ENCODE measurements at regions of chr21 and their contacts with region 1.

Region 1: GRCh38 chr21:33542640-33543504 is at the start of gene SON:
- DNase-seq: peak; percentile 98 to 100 (median 98)
- ATAC-seq: peak; percentile 93
- H3K4me3 ChIP-seq: peak within 1 kb of the TSS; percentile 71
- H3K27ac ChIP-seq: peak within 1 kb of the TSS; percentile 99
- H3K4me1 ChIP-seq: peaks cover 3 to 13% of the 10 kb centered on the region in 2 experiments; a peak in 3 of 5 replicates
- H3K27me3 ChIP-seq: no peaks in the 10 kb centered on the region
- CTCF ChIP-seq: no peak
- EP300 ChIP-seq: no peak; the same call in 1 of the 2 replicates
- POLR2A ChIP-seq: peak; percentile 97
- RAD21 ChIP-seq: no peak
- polyA plus RNA-seq, gene SON: 195 to 742 TPM

Region 2: GRCh38 chr21:33479679-33480480 is 63.0 kb before region 1 on chr21 and contains the start of gene TMEM50B:
- CTCF ChIA-PET with region 1: no interaction called
- POLR2A ChIA-PET with region 1: interaction called, 17 read pairs
- in situ Hi-C with region 1: no loop called
- intact Hi-C with region 1: no loop called
- DNase-seq: peak; percentile 98 to 100 (median 100)
- ATAC-seq: peak; percentile 95
- H3K4me3 ChIP-seq: peak within 1 kb of the TSS; percentile 97
- H3K27ac ChIP-seq: peak within 1 kb of the TSS; percentile 90
- H3K4me1 ChIP-seq: peaks cover 7 to 16% of the 10 kb centered on the region in 2 experiments; a peak in 3 of 5 replicates
- H3K27me3 ChIP-seq: no peaks in the 10 kb centered on the region
- CTCF ChIP-seq: peak; percentile 79 to 95 (median 94)
- EP300 ChIP-seq: no peak
- POLR2A ChIP-seq: peak; percentile 93
- RAD21 ChIP-seq: peak; percentile 65 to 66
- polyA plus RNA-seq, gene TMEM50B: 41.3 to 49.1 TPM

Region 3: DNA sequence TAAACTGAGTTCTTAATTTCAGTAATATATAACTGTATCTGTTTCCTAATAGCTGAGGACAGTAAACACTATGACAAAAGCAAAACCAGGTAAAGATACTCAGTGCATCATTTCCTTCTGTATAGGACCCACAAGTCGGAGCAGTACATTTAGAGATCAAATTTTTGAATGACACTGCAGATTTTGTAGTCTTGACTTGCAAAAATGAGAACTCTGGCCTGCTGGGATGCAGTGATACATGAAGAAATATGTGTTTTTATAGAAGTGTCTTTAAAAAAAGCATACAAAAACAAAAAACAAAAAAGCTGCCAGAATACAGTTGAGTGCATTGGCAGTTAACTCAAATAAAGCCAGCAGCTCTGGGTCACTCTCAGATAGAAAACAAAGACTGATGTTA is 19.9 kb before region 1 on chr21:
- CTCF ChIA-PET with region 1: no interaction called
- POLR2A ChIA-PET with region 1: interaction called, 30 read pairs
- in situ Hi-C with region 1: no loop called
- intact Hi-C with region 1: no loop called
- DNase-seq: peak in 1 of 4 experiments; percentile 25
- ATAC-seq: peak; percentile 67
- H3K4me3 ChIP-seq: no peak overlapping the region
- H3K27ac ChIP-seq: peak overlapping the region; percentile 5; the same call in 1 of the 3 replicates
- H3K4me1 ChIP-seq: no peaks in the 10 kb centered on the region
- H3K27me3 ChIP-seq: no peaks in the 10 kb centered on the region
- CTCF ChIP-seq: no peak
- EP300 ChIP-seq: no peak
- POLR2A ChIP-seq: peak; percentile 68; the same call in 1 of the 2 replicates
- RAD21 ChIP-seq: no peak

Region 4: GRCh38 chr21:33751120-33751519 is 208.2 kb after region 1 on chr21:
- CTCF ChIA-PET with region 1: no interaction called
- POLR2A ChIA-PET with region 1: no interaction called
- in situ Hi-C with region 1: no loop called
- intact Hi-C with region 1: loop called (anchors 5 kb)
- DNase-seq: peak in 2 of 4 experiments; percentile 62 to 81
- ATAC-seq: peak; percentile 84
- H3K4me3 ChIP-seq: no peak overlapping the region
- H3K27ac ChIP-seq: peak overlapping the region; percentile 21; the same call in 2 of the 3 replicates
- H3K4me1 ChIP-seq: peaks cover 0 to 7% of the 10 kb centered on the region in 2 experiments; a peak in 3 of 5 replicates
- H3K27me3 ChIP-seq: no peaks in the 10 kb centered on the region
- CTCF ChIP-seq: no peak
- EP300 ChIP-seq: peak; percentile 24; the same call in 1 of the 2 replicates
- POLR2A ChIP-seq: no peak
- RAD21 ChIP-seq: peak in 1 of 2 experiments; percentile 16; a peak in 1 of 4 replicates

Region 5: GRCh38 chr21:34642211-34643075 is 1099.6 kb after region 1 on chr21:
- CTCF ChIA-PET with region 1: no interaction called
- POLR2A ChIA-PET with region 1: no interaction called
- in situ Hi-C with region 1: no loop called
- intact Hi-C with region 1: no loop called
- DNase-seq: no peak
- ATAC-seq: no peak; the same call in 2 of the 3 replicates
- H3K4me3 ChIP-seq: no peak overlapping the region
- H3K27ac ChIP-seq: no peak overlapping the region
- H3K4me1 ChIP-seq: peaks cover 0 to 11% of the 10 kb centered on the region in 2 experiments; a peak in 3 of 5 replicates
- H3K27me3 ChIP-seq: peaks cover 10 to 23% of the 10 kb centered on the region in 2 experiments
- CTCF ChIP-seq: no peak
- EP300 ChIP-seq: no peak
- POLR2A ChIP-seq: no peak
- RAD21 ChIP-seq: no peak